Mammary epithelial cell (primary cell): ENCODE measurements at regions of chr11 and their contacts with region 1.

Region 1: DNA sequence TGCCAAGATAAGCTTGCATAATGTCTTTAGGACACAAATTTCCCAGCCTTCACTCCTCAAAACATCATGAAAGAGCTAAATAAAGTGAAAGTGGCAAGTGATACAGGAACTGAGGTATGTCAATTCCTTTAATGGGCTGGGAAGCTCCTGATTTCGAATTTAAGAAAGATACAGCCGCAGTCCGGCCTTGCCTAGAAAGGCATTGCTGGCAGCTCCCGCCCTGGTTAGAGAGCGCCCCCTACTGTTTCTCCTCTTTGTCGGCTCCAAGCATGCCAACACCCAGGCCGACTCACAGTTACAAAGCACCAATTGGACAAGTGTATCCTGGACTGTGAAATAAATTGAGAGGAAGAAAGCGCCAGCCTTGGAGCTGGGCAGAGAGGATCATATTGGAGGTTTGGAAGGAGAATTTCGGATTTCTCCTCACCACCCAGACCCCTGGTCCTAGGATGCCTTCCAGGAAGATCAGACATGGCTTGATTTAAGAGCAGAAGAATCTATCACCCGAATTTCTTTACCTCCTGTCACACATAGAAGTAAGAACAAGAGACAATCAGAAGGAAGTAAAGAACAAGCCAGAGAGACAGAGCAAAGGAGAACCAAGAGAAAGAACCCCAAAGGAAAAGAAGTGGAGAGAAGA is 84.0 kb downstream of the FAM76B start:
- DNase-seq: peak; percentile 78
- H3K4me3 ChIP-seq: no peak overlapping the region
- H3K27ac ChIP-seq: no peak overlapping the region
- H3K4me1 ChIP-seq: peaks cover 3% of the 10 kb centered on the region
- H3K27me3 ChIP-seq: no peaks in the 10 kb centered on the region
- CTCF ChIP-seq: peak; percentile 99

Region 2: GRCh38 chr11:95337175-95337957 is 368.2 kb before region 1 on chr11:
- CTCF ChIA-PET with region 1: no interaction called
- dilution Hi-C with region 1: no loop called
- in situ Hi-C with region 1: no loop called
- intact Hi-C with region 1: loop called (anchors 2 kb)
- DNase-seq: peak; percentile 90
- H3K4me3 ChIP-seq: peak overlapping the region in 1 of 3 experiments; percentile 2
- H3K27ac ChIP-seq: peak overlapping the region; percentile 46
- H3K4me1 ChIP-seq: peaks cover 25% of the 10 kb centered on the region
- H3K27me3 ChIP-seq: no peaks in the 10 kb centered on the region
- CTCF ChIP-seq: no peak

Region 3: GRCh38 chr11:95453616-95454171 is 251.9 kb before region 1 on chr11:
- CTCF ChIA-PET with region 1: no interaction called
- dilution Hi-C with region 1: no loop called
- in situ Hi-C with region 1: no loop called
- intact Hi-C with region 1: loop called (anchors 5 kb)
- DNase-seq: peak; percentile 91
- H3K4me3 ChIP-seq: no peak overlapping the region
- H3K27ac ChIP-seq: peak overlapping the region; percentile 53
- H3K4me1 ChIP-seq: peaks cover 34% of the 10 kb centered on the region
- H3K27me3 ChIP-seq: no peaks in the 10 kb centered on the region
- CTCF ChIP-seq: peak in 1 of 2 donors; percentile 1

Region 4: DNA sequence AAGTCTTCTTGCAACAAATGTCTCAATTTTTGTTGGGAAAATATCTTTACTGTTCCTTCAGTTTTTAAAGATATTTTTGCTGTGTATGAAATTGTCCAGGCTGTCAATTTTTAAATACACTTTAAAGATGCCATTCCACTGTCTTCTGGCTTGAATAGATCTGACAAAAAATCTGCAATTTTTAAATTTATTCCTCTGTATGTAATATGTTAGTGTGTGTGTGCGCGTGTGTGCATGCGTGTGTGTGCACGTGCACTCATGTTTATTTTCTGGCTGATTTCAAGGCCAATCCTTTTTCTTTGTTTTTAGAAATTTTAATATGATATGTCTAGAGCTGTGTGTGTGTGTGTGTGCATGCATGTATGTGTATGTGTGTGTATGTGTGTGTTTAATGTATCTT is 211.4 kb before region 1 on chr11:
- CTCF ChIA-PET with region 1: no interaction called
- dilution Hi-C with region 1: no loop called
- in situ Hi-C with region 1: no loop called
- intact Hi-C with region 1: no loop called
- DNase-seq: no peak
- H3K4me3 ChIP-seq: no peak overlapping the region
- H3K27ac ChIP-seq: no peak overlapping the region
- H3K4me1 ChIP-seq: peaks cover 10% of the 10 kb centered on the region
- H3K27me3 ChIP-seq: no peaks in the 10 kb centered on the region
- CTCF ChIP-seq: no peak

Region 5: GRCh38 chr11:95512682-95513081 is 192.9 kb before region 1 on chr11:
- CTCF ChIA-PET with region 1: interaction called, 3 read pairs
- dilution Hi-C with region 1: no loop called
- in situ Hi-C with region 1: no loop called
- intact Hi-C with region 1: loop called (anchors 2 kb)
- DNase-seq: peak; percentile 80
- H3K4me3 ChIP-seq: no peak overlapping the region
- H3K27ac ChIP-seq: peak overlapping the region; percentile 91
- H3K4me1 ChIP-seq: peaks cover 59% of the 10 kb centered on the region
- H3K27me3 ChIP-seq: no peaks in the 10 kb centered on the region
- CTCF ChIP-seq: no peak

Region 6: DNA sequence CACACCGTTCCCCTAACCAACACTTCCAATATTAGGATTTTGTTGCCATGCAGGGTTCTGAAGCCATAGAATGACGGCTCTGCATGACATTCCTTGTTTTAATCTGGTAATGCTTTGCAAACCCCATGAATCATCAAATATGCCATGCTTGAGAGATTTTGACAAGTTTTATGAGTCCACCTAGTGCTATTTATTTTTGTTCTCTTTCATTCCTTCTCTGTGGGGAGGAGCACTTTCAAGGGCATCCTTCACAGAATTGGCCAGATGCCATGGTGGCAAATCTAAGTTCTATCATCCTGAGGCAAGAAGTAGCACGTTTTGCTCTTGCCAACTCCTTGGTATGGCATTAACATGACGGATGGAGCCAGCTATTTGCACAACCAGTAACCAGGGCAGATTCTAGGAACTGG is 184.5 kb before region 1 on chr11:
- CTCF ChIA-PET with region 1: no interaction called
- dilution Hi-C with region 1: no loop called
- in situ Hi-C with region 1: no loop called
- intact Hi-C with region 1: loop called (anchors 2 kb)
- DNase-seq: peak; percentile 93
- H3K4me3 ChIP-seq: no peak overlapping the region
- H3K27ac ChIP-seq: peak overlapping the region; percentile 87
- H3K4me1 ChIP-seq: peaks cover 48% of the 10 kb centered on the region
- H3K27me3 ChIP-seq: no peaks in the 10 kb centered on the region
- CTCF ChIP-seq: no peak

Region 7: GRCh38 chr11:95764267-95764898 is 58.8 kb after region 1 on chr11:
- CTCF ChIA-PET with region 1: no interaction called
- dilution Hi-C with region 1: no loop called
- in situ Hi-C with region 1: no loop called
- intact Hi-C with region 1: loop called (anchors 5 kb)
- DNase-seq: peak; percentile 37
- H3K4me3 ChIP-seq: no peak overlapping the region
- H3K27ac ChIP-seq: no peak overlapping the region
- H3K4me1 ChIP-seq: peaks cover 8% of the 10 kb centered on the region
- H3K27me3 ChIP-seq: no peaks in the 10 kb centered on the region
- CTCF ChIP-seq: peak; percentile 45 to 61